ENCODE measurements at regions of chr17 and their contacts with region 1.

Region 1: GRCh38 chr17:67093348-67093747 is 49.0 kb downstream of the CACNG1 start:
- DNase-seq: no peak

Region 2: GRCh38 chr17:65990593-65990992 is 1102.8 kb before region 1 on chr17:
- intact Hi-C with region 1: loop called in 1 of 2 experiments (anchors 5 kb)
- DNase-seq: no peak

Region 3: GRCh38 chr17:67139784-67140657 is 46.7 kb after region 1 on chr17:
- intact Hi-C with region 1: no loop called
- DNase-seq: no peak

Measured in posterior vena cava (tissue), 2 donors.